CD14-positive monocyte (primary cell): ENCODE measurements at regions of chr1 and their contacts with region 1.

Region 1: DNA sequence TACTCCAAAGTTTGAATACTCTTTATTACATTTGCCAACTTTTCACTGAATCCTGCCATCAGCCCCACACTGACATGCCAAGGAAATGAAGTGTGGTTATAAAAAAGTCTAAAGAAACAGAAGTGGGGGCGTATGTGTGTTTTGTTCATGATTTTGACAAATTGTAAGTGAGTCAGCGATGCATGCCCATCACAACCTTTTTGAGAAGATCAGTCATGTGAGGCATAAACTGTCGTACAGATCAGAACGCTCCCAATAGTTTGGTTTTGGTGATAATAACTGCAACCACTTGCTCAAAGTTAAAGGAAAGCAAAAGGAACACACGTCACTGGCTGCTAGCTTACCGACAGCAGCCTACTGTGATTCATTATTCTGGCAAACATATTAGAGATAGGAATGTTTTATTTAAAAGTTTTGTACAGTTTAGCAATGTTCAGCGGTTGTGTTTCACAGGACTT is 95.6 kb downstream of the RGS2 start:
- DNase-seq: peak; percentile 41 to 66 (median 59)
- H3K4me3 ChIP-seq: peak overlapping the region in 1 of 3 experiments; percentile 13
- H3K4me3 Mint-ChIP-seq: peak overlapping the region in 1 of 2 donors; percentile 48
- H3K27ac ChIP-seq: no peak overlapping the region
- H3K27ac Mint-ChIP-seq: peak overlapping the region in 2 of 7 donors; percentile 41 to 65
- H3K4me1 ChIP-seq: peaks cover 22 to 24% of the 10 kb centered on the region in 2 donors
- H3K4me1 Mint-ChIP-seq: peaks cover 27% of the 10 kb centered on the region
- H3K27me3 ChIP-seq: no peaks in the 10 kb centered on the region
- H3K27me3 Mint-ChIP-seq: no peaks in the 10 kb centered on the region
- CTCF ChIP-seq: no peak

Region 2: DNA sequence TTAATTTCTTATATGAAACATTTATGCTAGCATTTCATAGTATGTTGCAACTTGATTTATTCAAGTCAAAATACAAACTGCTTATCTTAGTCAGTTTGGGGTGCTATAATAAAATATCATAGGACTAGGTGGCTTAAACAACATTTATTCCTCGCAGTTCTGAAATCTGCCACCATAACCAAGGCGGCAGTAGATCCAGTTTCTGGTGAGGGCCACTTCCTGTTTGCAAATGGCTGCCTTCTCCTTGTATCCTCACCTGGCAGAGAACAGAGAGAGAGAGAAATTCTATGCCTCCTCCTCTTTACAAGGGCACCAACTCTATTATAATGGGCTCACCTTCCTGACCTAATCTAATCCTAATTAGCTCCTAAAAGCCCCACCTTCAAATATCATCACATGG is 171.7 kb before region 1 on chr1:
- intact Hi-C with region 1: no loop called
- DNase-seq: no peak
- H3K4me3 ChIP-seq: no peak overlapping the region
- H3K4me3 Mint-ChIP-seq: no peak overlapping the region
- H3K27ac ChIP-seq: no peak overlapping the region
- H3K27ac Mint-ChIP-seq: no peak overlapping the region
- H3K4me1 ChIP-seq: no peaks in the 10 kb centered on the region
- H3K4me1 Mint-ChIP-seq: no peaks in the 10 kb centered on the region
- H3K27me3 ChIP-seq: no peaks in the 10 kb centered on the region
- H3K27me3 Mint-ChIP-seq: peaks cover 0 to 4% (median 0%) of the 10 kb centered on the region in 3 donors
- CTCF ChIP-seq: peak; percentile 27

Region 3: GRCh38 chr1:192959657-192960186 is 55.3 kb after region 1 on chr1:
- intact Hi-C with region 1: loop called in 1 of 2 experiments (anchors 10 kb)
- DNase-seq: no peak
- H3K4me3 ChIP-seq: no peak overlapping the region
- H3K4me3 Mint-ChIP-seq: no peak overlapping the region
- H3K27ac ChIP-seq: no peak overlapping the region
- H3K27ac Mint-ChIP-seq: peak overlapping the region in 3 of 7 donors; percentile 22 to 63 (median 46)
- H3K4me1 ChIP-seq: peaks cover 1 to 8% of the 10 kb centered on the region in 2 donors
- H3K4me1 Mint-ChIP-seq: peaks cover 10% of the 10 kb centered on the region
- H3K27me3 ChIP-seq: no peaks in the 10 kb centered on the region
- H3K27me3 Mint-ChIP-seq: peaks cover 0 to 3% (median 2%) of the 10 kb centered on the region in 3 donors
- CTCF ChIP-seq: no peak